PC-9 (cell line): ENCODE measurements at regions of chr5 and their contacts with region 1.

Region 1: GRCh38 chr5:40378396-40379177 is 301.1 kb upstream of the PTGER4 start:
- DNase-seq: no peak
- H3K4me3 ChIP-seq: no peak overlapping the region
- H3K27ac ChIP-seq: no peak overlapping the region
- H3K4me1 ChIP-seq: peaks cover 31% of the 10 kb centered on the region
- H3K27me3 ChIP-seq: no peaks in the 10 kb centered on the region
- CTCF ChIP-seq: no peak

Region 2: DNA sequence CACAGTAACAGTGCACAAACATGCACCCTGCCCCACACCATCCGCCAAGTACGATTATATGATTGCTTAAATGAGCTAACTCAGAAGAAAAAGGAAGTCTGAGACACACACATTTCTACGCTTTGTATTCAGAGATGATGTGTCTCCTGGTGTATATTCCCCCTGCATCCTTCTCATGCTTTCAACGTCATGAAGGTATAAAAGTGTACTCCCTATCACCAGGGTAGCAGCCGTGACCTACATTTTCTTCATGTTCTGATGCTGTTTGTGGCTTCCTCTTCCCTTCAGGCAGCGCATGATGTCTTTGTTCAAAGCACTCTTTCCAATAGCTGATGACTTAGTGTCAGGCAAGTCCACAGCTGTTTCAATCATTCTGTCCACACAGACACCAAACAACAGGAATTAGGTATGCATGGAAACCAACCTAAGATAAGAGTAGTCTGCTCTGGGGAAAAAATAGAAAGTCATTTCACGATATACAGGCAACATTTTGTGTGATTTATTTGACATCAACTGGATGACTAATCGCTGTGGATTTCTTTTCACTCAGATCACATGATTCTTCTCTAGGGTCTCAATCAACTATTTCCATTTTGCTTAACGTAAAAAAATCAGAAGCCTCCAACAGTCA is 31.8 kb after region 1 on chr5:
- CTCF ChIA-PET with region 1: no interaction called
- POLR2A ChIA-PET with region 1: interaction called, 37 read pairs
- intact Hi-C with region 1: no loop called
- DNase-seq: peak; percentile 41 to 44
- H3K4me3 ChIP-seq: no peak overlapping the region
- H3K27ac ChIP-seq: no peak overlapping the region
- H3K4me1 ChIP-seq: peaks cover 20% of the 10 kb centered on the region
- H3K27me3 ChIP-seq: no peaks in the 10 kb centered on the region
- CTCF ChIP-seq: no peak

Region 3: GRCh38 chr5:40694433-40694832 is 315.8 kb after region 1 on chr5:
- CTCF ChIA-PET with region 1: interaction called, 11 read pairs
- POLR2A ChIA-PET with region 1: no interaction called
- intact Hi-C with region 1: no loop called
- DNase-seq: no peak
- H3K4me3 ChIP-seq: no peak overlapping the region
- H3K27ac ChIP-seq: no peak overlapping the region
- H3K4me1 ChIP-seq: peaks cover 8% of the 10 kb centered on the region; the same call in 1 of the 2 replicates
- H3K27me3 ChIP-seq: no peaks in the 10 kb centered on the region
- CTCF ChIP-seq: no peak